ENCODE measurements at regions of chr3 and their contacts with region 1.

Region 1: DNA sequence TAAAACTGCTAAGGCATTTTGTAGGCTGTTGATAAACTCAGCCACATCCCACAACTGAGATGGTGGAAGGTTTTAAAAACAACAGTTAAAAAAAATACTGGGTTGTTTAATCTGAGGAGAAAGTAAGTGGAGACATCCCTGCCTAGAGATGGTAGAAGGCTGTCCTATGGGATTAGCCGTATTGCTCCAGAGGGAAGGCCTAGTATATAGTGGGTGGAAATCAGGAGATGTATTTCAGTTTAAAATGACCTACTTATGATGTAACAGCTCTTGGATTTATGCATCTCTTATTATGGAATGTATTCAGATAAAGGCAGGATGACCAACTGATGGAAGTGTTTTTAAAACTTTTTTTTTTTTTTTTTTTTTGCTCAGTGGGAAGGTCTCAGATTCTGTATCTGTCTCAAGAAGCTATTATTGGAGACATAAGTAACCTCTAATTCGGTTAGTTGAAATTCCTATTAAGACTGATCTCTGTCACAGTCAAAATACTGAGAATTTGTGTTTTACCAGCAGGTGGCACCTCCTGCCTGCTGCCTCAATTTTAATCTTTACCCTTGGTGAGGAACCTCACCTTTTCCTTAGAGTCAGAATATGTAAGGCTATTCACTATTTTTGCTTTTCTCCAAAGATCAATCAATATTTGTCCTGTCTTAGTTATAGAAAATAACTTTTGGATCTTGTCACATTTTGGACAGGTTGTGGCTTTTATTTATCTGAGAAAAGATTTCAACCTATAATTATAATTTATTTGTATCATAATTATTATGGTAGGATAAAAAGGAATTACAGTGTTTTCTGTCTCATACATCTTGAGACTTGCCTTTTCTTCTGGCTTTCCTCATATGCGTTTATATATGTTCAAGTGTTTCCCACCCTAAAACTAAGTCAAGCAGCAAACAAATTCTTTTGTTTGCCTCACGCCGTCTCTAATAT is 63.0 kb downstream of the VPS8 start:
- DNase-seq: no peak
- H3K4me3 ChIP-seq: no peak overlapping the region
- CTCF ChIP-seq: peak; percentile 30

Region 2: DNA sequence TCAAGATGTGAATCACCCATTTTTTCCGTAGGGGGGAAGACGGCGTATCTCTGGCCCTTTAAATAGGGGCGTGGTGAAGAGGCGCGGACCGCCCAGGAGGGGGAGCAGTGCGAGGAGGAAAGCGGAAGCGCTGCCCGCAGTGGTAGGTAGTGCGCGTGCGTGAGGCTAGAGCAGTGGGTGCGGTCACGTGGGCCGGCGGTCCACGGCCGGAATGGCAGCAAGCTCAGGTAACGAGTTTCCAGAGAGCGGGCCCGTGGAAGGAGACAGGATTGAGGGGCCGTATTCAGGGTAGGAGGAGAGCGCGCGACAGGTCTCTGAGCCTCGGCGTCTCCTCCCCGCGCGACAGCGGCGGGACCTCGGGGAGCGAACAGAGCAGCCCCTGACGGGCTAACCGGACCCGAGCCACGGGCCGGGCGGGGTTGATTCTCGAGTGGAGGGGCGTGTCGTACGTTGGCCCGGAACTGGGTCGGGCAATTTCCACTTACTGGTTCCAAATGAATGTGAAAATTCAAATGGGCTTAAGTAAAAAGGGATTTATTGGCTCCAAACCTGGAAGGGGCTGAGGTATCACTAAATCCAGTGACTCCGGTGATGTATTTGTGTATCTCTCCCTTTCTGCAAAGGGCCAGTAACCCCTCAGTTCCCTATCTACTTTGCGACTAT is 62.8 kb before region 1 on chr3 and contains the start of gene VPS8:
- CTCF ChIA-PET with region 1: no interaction called
- POLR2A ChIA-PET with region 1: no interaction called
- DNase-seq: peak; percentile 45
- H3K4me3 ChIP-seq: peak within 1 kb of the TSS; percentile 91
- CTCF ChIP-seq: peak; percentile 80

Region 3: GRCh38 chr3:185215873-185216606 is 341.1 kb after region 1 on chr3:
- CTCF ChIA-PET with region 1: interaction called, 13 read pairs
- POLR2A ChIA-PET with region 1: no interaction called
- DNase-seq: no peak
- H3K4me3 ChIP-seq: no peak overlapping the region
- CTCF ChIP-seq: peak; percentile 35

Region 4: DNA sequence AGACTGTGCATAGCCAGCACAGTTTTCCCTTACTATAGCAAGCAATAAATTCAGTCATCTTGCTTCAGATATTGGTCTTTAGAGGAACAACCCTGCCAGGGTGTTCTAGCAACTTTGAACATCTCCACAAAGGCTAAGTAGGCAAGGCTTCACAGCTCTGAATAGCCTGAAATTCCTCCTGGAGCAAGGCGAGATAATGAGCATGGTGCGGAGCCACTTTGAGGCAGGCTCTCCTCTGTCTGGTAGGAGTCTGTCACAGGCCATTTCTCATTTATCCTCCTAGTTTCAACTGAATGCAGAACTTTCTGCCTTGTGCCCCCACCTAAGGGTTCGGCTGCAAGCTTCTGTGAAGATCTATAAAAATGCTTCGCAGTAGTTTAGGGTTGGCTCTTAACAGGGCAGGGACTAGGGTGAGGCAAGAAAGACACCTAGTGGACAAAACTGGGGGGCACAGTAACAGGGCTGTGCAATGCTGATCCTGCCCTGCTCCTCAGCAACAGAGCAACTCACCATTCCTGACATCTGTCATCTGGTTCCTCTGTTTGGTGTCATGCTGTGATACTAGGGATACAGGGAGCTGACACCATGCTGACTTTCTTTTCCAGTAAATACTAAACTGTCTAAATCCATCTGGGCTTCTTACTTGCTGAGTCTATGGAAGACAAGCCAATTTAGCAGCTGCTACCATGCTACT is 395.4 kb after region 1 on chr3:
- CTCF ChIA-PET with region 1: interaction called, 14 read pairs
- POLR2A ChIA-PET with region 1: no interaction called
- DNase-seq: no peak
- H3K4me3 ChIP-seq: no peak overlapping the region
- CTCF ChIP-seq: peak; percentile 64

Measured in AG04449 (cell line).